Activated CD4-positive, alpha-beta T cell treated with anti-CD3 and anti-CD28 coated beads, Interleukin-2, amount 10 ng/mL, durations not matched to agents 24 days and 14 days (primary cell): ENCODE measurements at regions of chr4 and their contacts with region 1.

Region 1: DNA sequence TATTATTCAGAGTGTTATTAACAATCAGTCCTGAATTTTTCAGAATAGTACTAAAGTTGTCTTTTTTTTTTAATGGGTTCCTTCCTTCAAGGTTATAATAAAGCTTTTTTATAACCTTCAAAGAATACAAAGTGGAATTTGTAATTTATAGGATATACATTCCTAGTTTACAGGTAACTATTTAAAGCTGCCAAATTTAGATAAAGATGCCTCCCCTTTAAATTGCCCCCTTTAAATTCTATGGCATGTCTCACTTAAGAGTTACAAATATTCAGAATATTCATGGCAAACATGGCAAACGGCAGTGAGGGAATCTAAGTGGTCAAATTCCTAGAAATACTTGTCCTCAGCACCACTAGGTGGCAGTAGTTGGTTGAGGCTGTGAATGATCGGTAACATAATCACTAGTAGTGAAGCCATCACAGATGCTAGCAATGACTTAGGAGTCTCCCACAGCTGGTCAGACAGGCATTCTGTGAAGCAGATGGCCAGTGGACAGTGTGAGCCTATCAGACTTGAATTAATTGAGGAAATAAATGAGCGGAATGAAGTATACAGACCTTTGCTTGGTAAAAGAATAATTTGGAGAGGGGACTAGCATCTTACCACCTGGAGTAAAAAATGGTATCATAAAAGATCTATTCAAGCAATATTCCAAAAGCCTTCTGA is 86.4 kb downstream of the CBR4 start:
- DNase-seq: peak; percentile 85
- H3K4me3 Mint-ChIP-seq: no peak overlapping the region
- H3K27ac Mint-ChIP-seq: no peak overlapping the region
- H3K4me1 Mint-ChIP-seq: peaks cover 2% of the 10 kb centered on the region
- H3K27me3 Mint-ChIP-seq: no peaks in the 10 kb centered on the region

Region 2: DNA sequence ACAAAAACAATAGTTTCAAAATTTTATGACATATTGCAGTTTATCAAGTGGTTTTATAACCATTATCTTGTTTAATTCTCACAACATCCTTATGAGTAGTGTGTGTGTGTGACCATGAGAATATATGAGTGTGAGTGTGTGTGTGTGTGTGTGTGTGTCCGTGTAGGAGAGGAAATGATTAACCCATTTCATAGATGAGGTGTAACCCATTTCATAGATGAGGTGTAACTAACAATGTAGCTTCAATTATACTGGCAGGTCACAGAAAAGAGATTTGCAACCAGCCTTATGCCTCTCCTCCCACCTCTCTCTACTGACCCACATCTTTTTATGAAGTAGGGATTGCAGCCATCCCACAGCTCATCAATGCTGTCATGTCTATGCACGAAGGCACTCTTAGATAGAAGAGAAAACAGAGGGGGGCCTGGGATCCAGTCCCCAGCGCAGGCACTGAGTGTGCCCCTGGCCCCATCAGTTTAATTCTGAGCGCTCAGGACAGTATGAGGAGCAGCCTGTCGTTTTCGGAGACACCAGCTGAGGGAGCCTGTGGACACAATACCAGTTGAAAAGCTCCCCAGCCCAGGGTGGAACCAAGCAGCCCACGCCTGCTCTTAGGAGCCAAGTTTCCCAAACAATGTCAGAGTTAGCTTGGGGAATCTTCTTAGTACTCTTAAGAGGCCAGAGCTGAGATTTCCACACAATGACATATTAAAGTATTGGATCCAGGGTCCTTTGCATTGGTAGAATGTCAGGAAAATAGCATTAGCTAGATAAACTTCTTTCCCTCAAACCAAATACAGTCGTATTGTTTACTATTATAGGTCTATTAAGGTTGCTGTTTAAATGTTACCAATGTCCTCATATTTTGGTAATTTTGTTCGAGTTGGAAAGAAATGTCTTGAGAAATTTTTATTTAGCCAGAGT is 338.2 kb before region 1 on chr4:
- intact Hi-C with region 1: loop called (anchors 10 kb)
- DNase-seq: peak; percentile 65
- H3K4me3 Mint-ChIP-seq: no peak overlapping the region
- H3K27ac Mint-ChIP-seq: no peak overlapping the region
- H3K4me1 Mint-ChIP-seq: peaks cover 3% of the 10 kb centered on the region
- H3K27me3 Mint-ChIP-seq: peaks cover 23% of the 10 kb centered on the region

Region 3: GRCh38 chr4:168886351-168886750 is 37.3 kb before region 1 on chr4:
- intact Hi-C with region 1: no loop called
- DNase-seq: no peak
- H3K4me3 Mint-ChIP-seq: no peak overlapping the region
- H3K27ac Mint-ChIP-seq: no peak overlapping the region
- H3K4me1 Mint-ChIP-seq: peaks cover 2% of the 10 kb centered on the region
- H3K27me3 Mint-ChIP-seq: no peaks in the 10 kb centered on the region

Region 4: GRCh38 chr4:168978001-168978700 is 54.5 kb after region 1 on chr4:
- intact Hi-C with region 1: no loop called
- DNase-seq: no peak
- H3K4me3 Mint-ChIP-seq: no peak overlapping the region
- H3K27ac Mint-ChIP-seq: no peak overlapping the region
- H3K4me1 Mint-ChIP-seq: no peaks in the 10 kb centered on the region
- H3K27me3 Mint-ChIP-seq: no peaks in the 10 kb centered on the region

Region 5: GRCh38 chr4:169492438-169493163 is 568.9 kb after region 1 on chr4:
- intact Hi-C with region 1: loop called (anchors 1 kb)
- DNase-seq: peak; percentile 82
- H3K4me3 Mint-ChIP-seq: no peak overlapping the region
- H3K27ac Mint-ChIP-seq: no peak overlapping the region
- H3K4me1 Mint-ChIP-seq: peaks cover 3% of the 10 kb centered on the region
- H3K27me3 Mint-ChIP-seq: no peaks in the 10 kb centered on the region